ENCODE measurements at regions of chr11 and their contacts with region 1.

Region 1: DNA sequence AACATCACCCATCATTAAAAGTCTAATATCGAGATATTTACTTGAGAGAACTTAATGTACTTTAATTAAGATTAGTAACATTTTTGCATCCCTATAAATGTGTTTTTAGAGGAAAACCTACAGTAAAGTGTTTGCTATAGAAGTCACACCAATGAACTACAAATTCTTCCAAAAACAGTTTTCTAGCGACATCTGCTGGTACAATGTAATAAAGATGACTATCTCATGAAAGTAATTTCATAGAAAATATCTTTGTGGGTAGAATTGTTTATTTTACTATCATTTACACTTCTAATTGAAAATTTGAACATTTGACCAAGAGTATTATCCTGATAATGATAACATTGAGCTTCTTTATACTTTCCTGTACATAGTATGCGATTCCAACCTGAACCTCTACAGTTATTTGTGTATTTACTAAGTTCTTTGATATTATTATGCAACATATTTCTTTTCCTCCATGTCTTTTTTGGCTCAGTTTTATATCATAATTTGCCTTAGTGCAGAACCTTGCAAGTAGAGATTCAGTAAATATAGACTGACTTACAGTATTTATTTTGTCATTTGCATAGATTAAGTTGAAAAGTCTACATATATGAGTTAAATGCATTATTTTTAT is 252.7 kb downstream of the TMEM135 start:
- DNase-seq: no peak
- H3K4me3 Mint-ChIP-seq: no peak overlapping the region
- H3K27ac Mint-ChIP-seq: no peak overlapping the region
- H3K4me1 Mint-ChIP-seq: no peaks in the 10 kb centered on the region
- H3K27me3 Mint-ChIP-seq: no peaks in the 10 kb centered on the region

Region 2: DNA sequence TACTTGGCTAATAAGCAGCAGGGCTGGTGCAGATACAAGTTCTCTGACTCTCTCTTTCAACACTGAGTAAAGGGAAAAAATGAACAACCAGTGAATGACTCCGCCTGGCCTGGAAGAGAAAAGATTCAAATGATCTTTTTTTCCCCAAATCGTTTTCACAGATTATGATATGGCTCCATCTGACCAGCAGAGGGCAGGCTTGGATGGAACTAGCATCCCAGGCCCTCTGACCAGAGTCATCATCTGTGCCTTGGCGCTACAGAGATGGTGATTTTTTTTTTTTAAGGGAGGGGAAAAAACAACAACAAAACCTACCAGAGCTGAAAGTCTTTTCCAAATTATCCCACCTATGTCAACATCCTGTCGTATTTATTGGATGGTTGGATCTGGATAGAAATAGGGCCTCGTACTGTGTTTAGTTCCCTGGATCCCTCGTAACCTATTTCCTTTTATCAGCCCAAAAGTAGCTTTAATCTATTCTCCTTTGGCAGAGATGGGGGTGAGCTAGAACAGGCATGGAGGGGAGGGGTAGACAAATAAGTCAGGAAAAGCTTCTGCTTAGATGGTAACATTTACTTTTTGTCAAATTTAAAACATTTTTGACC is 420.3 kb before region 1 on chr11:
- CTCF ChIA-PET with region 1: no interaction called
- intact Hi-C with region 1: loop called (anchors 1 kb)
- DNase-seq: peak; percentile 73
- H3K4me3 Mint-ChIP-seq: no peak overlapping the region
- H3K27ac Mint-ChIP-seq: no peak overlapping the region
- H3K4me1 Mint-ChIP-seq: no peaks in the 10 kb centered on the region
- H3K27me3 Mint-ChIP-seq: no peaks in the 10 kb centered on the region

Region 3: GRCh38 chr11:86938900-86939880 is 351.2 kb before region 1 on chr11:
- CTCF ChIA-PET with region 1: interaction called, 5 read pairs
- intact Hi-C with region 1: loop called (anchors 1 kb)
- DNase-seq: no peak
- H3K4me3 Mint-ChIP-seq: no peak overlapping the region
- H3K27ac Mint-ChIP-seq: no peak overlapping the region
- H3K4me1 Mint-ChIP-seq: no peaks in the 10 kb centered on the region
- H3K27me3 Mint-ChIP-seq: peaks cover 6% of the 10 kb centered on the region

Region 4: GRCh38 chr11:86978756-86979608 is 311.4 kb before region 1 on chr11:
- CTCF ChIA-PET with region 1: interaction called, 5 read pairs
- intact Hi-C with region 1: loop called (anchors 1 kb)
- DNase-seq: peak; percentile 19
- H3K4me3 Mint-ChIP-seq: no peak overlapping the region
- H3K27ac Mint-ChIP-seq: no peak overlapping the region
- H3K4me1 Mint-ChIP-seq: no peaks in the 10 kb centered on the region
- H3K27me3 Mint-ChIP-seq: no peaks in the 10 kb centered on the region

Region 5: DNA sequence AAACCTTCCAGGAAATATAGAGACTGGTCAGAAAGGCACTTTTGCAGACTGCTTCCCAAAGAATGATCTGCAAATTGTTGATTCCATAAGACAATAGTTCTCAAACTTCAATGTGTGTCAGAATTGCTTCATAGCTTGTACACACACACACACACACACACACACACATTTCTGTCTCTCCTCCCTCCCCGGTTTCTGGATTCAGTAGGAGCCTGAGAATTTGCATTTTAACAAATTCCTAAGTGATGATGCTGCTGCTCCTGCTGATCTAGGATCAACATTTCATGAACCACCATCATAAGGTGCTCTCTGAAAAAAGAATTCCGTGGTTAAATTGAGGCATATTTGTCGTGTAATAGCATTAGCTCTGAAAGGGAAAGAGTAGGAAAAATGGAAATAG is 299.9 kb before region 1 on chr11:
- CTCF ChIA-PET with region 1: interaction called, 12 read pairs
- intact Hi-C with region 1: loop called (anchors 1 kb)
- DNase-seq: no peak
- H3K4me3 Mint-ChIP-seq: no peak overlapping the region
- H3K27ac Mint-ChIP-seq: no peak overlapping the region
- H3K4me1 Mint-ChIP-seq: no peaks in the 10 kb centered on the region
- H3K27me3 Mint-ChIP-seq: no peaks in the 10 kb centered on the region

Region 6: DNA sequence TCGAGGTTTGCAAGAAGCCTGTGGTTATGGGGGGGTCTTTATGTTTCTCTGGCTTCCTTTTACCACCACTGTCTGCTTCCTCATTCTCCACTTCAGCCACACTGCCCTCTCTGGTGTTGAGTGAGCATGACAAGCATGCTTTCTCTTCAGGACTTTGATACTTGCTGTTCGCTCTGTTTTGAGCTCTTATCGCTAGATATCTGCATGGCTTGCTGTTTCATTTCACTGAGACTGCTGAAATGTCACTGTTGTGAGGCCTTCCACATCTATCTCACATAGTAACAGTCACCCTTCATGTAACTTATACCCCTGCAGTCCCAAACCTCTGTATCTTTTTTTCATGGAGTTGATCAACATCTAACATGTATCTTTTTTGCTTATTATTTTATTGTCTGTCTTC is 192.8 kb before region 1 on chr11:
- CTCF ChIA-PET with region 1: no interaction called
- intact Hi-C with region 1: loop called (anchors 2 kb)
- DNase-seq: peak; percentile 53
- H3K4me3 Mint-ChIP-seq: no peak overlapping the region
- H3K27ac Mint-ChIP-seq: no peak overlapping the region
- H3K4me1 Mint-ChIP-seq: peaks cover 4% of the 10 kb centered on the region
- H3K27me3 Mint-ChIP-seq: no peaks in the 10 kb centered on the region

Region 7: GRCh38 chr11:87421422-87421821 is 131.0 kb after region 1 on chr11:
- CTCF ChIA-PET with region 1: no interaction called
- intact Hi-C with region 1: loop called (anchors 5 kb)
- DNase-seq: peak; percentile 38
- H3K4me3 Mint-ChIP-seq: no peak overlapping the region
- H3K27ac Mint-ChIP-seq: no peak overlapping the region
- H3K4me1 Mint-ChIP-seq: no peaks in the 10 kb centered on the region
- H3K27me3 Mint-ChIP-seq: peaks cover 2% of the 10 kb centered on the region

Measured in activated naive CD4-positive, alpha-beta T cell treated with anti-CD3 and anti-CD28 coated beads for 36 hours (primary cell).